T-cell (primary cell): ENCODE measurements at regions of chr7 and their contacts with region 1.

Region 1: GRCh38 chr7:1925349-1925748 is 255.3 kb downstream of the ELFN1 start:
- DNase-seq: peak in 2 of 35 experiments; percentile 24 to 39
- ATAC-seq: no peak
- H3K4me3 ChIP-seq: peak overlapping the region in 1 of 2 donors; percentile 27
- H3K4me3 Mint-ChIP-seq: peak overlapping the region; percentile 35 to 65 (median 42)
- H3K27ac ChIP-seq: peak overlapping the region; percentile 76
- H3K27ac Mint-ChIP-seq: peak overlapping the region; percentile 58 to 84
- H3K4me1 ChIP-seq: peaks cover 69 to 79% of the 10 kb centered on the region in 2 experiments
- H3K4me1 Mint-ChIP-seq: peaks cover 79 to 89% (median 83%) of the 10 kb centered on the region in 3 donors
- H3K27me3 ChIP-seq: no peaks in the 10 kb centered on the region
- H3K27me3 Mint-ChIP-seq: no peaks in the 10 kb centered on the region

Region 2: DNA sequence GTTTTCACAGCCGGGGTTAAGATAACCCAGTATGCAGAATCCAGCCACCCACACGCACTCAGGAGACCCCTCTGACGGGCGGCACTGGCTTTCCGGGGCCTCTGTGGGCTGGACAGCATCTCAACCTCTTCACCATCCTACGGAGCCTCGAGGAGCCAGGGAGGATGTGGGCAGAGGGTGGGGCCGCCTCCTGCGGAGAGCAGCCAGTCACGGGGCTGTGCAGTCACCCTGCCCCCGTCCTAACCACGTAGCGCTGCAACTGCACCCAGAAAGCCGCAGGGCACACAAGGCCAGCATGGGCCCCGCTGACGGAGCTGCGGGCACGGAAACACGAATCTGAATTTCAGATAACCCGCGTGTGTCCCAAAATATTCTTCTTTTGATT is 15.0 kb after region 1 on chr7:
- CTCF ChIA-PET with region 1: no interaction called
- POLR2A ChIA-PET with region 1: interaction called, 15 to 24 read pairs
- DNase-seq: peak; percentile 78 to 99 (median 95)
- ATAC-seq: peak; percentile 90 to 94 (median 93)
- H3K4me3 ChIP-seq: peak overlapping the region; percentile 75 to 93
- H3K4me3 Mint-ChIP-seq: peak overlapping the region; percentile 93 to 96 (median 95)
- H3K27ac ChIP-seq: peak overlapping the region; percentile 95
- H3K27ac Mint-ChIP-seq: peak overlapping the region; percentile 98 to 99
- H3K4me1 ChIP-seq: peaks cover 48 to 94% of the 10 kb centered on the region in 2 experiments
- H3K4me1 Mint-ChIP-seq: peaks cover 65 to 69% (median 68%) of the 10 kb centered on the region in 3 donors
- H3K27me3 ChIP-seq: no peaks in the 10 kb centered on the region
- H3K27me3 Mint-ChIP-seq: no peaks in the 10 kb centered on the region